Activated naive CD4-positive, alpha-beta T cell treated with anti-CD3 and anti-CD28 coated beads for 36 hours (primary cell): ENCODE measurements at regions of chr7 and their contacts with region 1.

Region 1: DNA sequence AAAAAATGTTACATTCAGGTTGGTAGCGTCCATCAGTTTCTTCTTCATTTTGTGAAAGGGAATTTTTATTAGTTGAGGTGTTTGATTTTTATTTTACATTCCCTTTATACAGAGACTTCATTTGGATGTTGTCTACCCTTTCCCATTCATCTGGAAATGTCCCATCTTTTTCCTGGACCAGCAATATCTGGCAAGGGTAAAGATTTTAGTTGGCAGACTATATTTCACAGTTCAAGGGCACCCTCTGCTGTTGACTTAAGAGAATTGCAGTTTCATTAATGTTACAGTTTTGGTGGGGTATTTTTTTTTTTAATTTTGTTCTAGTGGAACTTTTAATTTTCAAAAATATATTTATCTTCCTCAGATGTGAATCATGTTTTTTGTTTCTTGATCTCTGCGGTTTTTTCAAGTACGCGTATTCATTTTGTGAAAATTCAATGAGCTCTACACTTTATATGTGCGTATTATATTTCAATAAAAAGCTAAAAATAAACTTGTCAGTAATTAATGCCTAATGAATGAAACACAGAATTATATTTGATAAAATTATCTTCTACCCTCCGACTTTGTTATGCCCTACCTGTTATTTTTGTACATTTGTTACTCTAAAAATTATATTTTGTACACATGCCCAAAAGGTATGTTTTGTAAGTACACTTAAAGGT is 97.9 kb upstream of the KLF14 start:
- DNase-seq: no peak
- H3K4me3 Mint-ChIP-seq: no peak overlapping the region
- H3K27ac Mint-ChIP-seq: no peak overlapping the region
- H3K4me1 Mint-ChIP-seq: no peaks in the 10 kb centered on the region
- H3K27me3 Mint-ChIP-seq: peaks cover 8% of the 10 kb centered on the region

Region 2: GRCh38 chr7:130758429-130759056 is 73.4 kb before region 1 on chr7:
- CTCF ChIA-PET with region 1: interaction called, 13 read pairs
- intact Hi-C with region 1: loop called (anchors 1 kb)
- DNase-seq: no peak
- H3K4me3 Mint-ChIP-seq: no peak overlapping the region
- H3K27ac Mint-ChIP-seq: no peak overlapping the region
- H3K4me1 Mint-ChIP-seq: no peaks in the 10 kb centered on the region
- H3K27me3 Mint-ChIP-seq: peaks cover 3% of the 10 kb centered on the region

Region 3: GRCh38 chr7:130814778-130815335 is 17.1 kb before region 1 on chr7:
- CTCF ChIA-PET with region 1: interaction called, 6 read pairs
- intact Hi-C with region 1: loop called (anchors 2 kb)
- DNase-seq: peak; percentile 39
- H3K4me3 Mint-ChIP-seq: no peak overlapping the region
- H3K27ac Mint-ChIP-seq: no peak overlapping the region
- H3K4me1 Mint-ChIP-seq: no peaks in the 10 kb centered on the region
- H3K27me3 Mint-ChIP-seq: no peaks in the 10 kb centered on the region